ENCODE measurements at regions of chr2 and their contacts with region 1.

Region 1: DNA sequence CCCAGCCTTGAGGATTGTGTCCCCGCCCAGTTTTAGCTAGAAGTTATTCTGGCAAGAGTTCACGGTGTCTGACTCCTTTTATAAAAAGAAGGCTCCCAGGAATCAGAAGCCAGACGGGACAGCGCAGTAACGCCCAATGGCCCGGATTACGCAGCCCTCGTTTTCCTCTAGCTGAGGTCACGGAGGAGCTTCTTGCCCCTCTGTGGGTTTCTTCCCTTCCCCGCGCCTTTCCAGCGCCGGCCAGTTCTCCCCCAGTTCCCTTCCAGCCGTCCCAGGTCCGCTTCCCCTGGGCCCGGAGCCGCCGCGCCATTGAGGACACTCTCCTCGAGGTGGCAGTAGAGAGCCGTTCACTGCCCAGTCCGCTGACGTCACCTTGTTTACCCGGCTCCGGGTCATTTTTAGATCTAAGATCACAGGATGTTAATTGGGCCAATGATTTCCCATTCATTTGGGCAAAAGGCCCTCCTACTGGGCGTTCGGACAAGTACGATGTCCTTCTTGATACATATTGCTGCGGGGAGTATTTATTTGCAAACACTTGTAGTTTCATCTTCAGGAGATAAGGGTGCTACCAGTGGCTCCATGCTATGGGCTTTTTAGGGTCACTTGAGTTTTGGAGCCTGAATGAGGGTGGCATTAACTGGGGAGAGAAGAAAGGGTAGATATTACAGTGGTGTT is 81.5 kb upstream of the PPM1B start:
- DNase-seq: peak; percentile 30
- H3K4me3 ChIP-seq: peak overlapping the region; percentile 54
- H3K27ac ChIP-seq: no peak overlapping the region
- H3K27me3 ChIP-seq: no peaks in the 10 kb centered on the region
- CTCF ChIP-seq: peak; percentile 96

Region 2: GRCh38 chr2:44075541-44075940 is 11.6 kb before region 1 on chr2:
- CTCF ChIA-PET with region 1: interaction called, 13 read pairs
- POLR2A ChIA-PET with region 1: no interaction called
- DNase-seq: no peak
- H3K4me3 ChIP-seq: no peak overlapping the region
- H3K27ac ChIP-seq: no peak overlapping the region
- H3K27me3 ChIP-seq: peaks cover 5% of the 10 kb centered on the region
- CTCF ChIP-seq: no peak

Region 3: DNA sequence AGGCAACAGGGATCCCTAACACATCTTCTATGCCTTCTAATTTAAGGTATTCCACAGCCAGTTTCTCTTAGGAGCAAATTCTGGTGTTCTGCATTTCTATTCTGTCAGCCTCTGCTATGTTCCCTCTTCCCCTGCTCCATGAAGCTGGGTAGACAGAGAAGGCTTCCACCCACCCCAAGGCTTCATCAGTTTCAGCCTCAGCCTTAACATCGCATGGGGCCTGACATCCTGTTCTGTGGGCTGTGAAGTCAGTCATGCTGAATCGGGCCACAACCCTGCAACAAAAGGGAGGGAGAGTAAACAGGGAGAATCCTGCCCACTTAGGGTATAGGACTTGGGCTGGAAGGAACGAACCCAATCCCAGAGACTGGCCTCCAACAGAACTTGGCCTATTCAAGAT is 10.9 kb after region 1 on chr2:
- CTCF ChIA-PET with region 1: interaction called, 29 read pairs
- POLR2A ChIA-PET with region 1: no interaction called
- DNase-seq: no peak
- H3K4me3 ChIP-seq: no peak overlapping the region
- H3K27ac ChIP-seq: no peak overlapping the region
- H3K27me3 ChIP-seq: no peaks in the 10 kb centered on the region
- CTCF ChIP-seq: no peak

Region 4: GRCh38 chr2:44244129-44244871 is 157.1 kb after region 1 on chr2:
- CTCF ChIA-PET with region 1: interaction called, 29 read pairs
- POLR2A ChIA-PET with region 1: no interaction called
- DNase-seq: peak; percentile 30
- H3K4me3 ChIP-seq: no peak overlapping the region
- H3K27ac ChIP-seq: no peak overlapping the region
- H3K27me3 ChIP-seq: no peaks in the 10 kb centered on the region
- CTCF ChIP-seq: peak; percentile 66

Region 5: DNA sequence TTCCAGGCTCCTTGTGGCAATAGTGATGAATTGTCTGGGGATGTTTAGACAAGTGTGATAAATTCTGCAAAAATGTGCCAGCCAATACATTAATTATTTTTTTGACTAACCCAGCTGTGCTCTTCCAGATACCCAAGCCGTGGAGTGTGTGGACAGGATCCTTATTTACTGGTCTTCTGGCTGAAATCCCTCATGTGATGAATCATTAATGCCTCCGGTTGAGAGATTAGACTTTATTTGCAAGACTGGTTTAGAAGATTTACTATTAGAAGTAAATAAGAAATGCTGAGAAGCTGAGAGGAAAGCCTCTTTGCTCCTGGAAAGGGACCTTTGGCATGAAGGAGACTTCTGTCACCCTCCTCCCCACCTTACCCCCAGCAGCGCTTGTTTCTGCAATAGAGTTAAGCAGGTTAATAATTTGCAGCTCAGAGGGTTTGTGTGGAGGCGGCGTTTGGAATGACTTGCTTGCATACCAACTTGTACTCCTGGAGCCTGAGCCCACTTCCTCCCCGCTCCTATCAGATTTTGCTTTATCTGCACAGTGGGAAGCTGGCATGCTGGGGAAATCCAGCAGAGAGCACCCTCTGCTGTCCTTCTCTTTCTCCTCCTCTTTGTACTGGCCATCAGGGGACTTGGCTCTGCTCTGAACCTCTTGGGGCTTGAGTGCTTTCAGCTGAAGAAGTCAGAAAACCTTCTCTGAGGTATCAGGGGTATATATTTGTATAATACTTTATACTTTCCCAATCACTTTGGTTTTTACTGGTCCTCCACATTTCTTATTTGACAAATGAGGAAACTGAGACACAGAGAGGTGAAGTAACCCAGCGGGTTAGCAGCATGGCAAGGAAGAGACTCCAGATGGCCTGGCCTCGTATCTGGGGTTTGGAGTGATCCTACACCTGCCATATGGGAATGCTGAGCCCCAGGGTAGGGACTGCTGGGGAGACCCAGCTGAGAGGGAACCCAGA is 204.4 kb after region 1 on chr2:
- CTCF ChIA-PET with region 1: interaction called, 13 read pairs
- POLR2A ChIA-PET with region 1: no interaction called
- DNase-seq: peak; percentile 41
- H3K4me3 ChIP-seq: no peak overlapping the region; the same call in 1 of the 2 replicates
- H3K27ac ChIP-seq: peak overlapping the region; percentile 24
- H3K27me3 ChIP-seq: peaks cover 15% of the 10 kb centered on the region
- CTCF ChIP-seq: peak; percentile 77

Measured in AG04450 (cell line).